Upper lobe of right lung (tissue), 1 donor: ENCODE measurements at regions of chr2 and their contacts with region 1.

Region 1: GRCh38 chr2:8681786-8682692 is at the start of gene ID2:
- DNase-seq: peak; percentile 100
- ATAC-seq: peak; percentile 84
- H3K4me3 ChIP-seq: peak within 1 kb of the TSS; percentile 71
- H3K27ac ChIP-seq: peak within 1 kb of the TSS; percentile 98
- H3K4me1 ChIP-seq: peaks cover 36% of the 10 kb centered on the region
- H3K27me3 ChIP-seq: no peaks in the 10 kb centered on the region
- CTCF ChIP-seq: no peak
- total RNA-seq, gene ID2: 99.5 TPM

Region 2: DNA sequence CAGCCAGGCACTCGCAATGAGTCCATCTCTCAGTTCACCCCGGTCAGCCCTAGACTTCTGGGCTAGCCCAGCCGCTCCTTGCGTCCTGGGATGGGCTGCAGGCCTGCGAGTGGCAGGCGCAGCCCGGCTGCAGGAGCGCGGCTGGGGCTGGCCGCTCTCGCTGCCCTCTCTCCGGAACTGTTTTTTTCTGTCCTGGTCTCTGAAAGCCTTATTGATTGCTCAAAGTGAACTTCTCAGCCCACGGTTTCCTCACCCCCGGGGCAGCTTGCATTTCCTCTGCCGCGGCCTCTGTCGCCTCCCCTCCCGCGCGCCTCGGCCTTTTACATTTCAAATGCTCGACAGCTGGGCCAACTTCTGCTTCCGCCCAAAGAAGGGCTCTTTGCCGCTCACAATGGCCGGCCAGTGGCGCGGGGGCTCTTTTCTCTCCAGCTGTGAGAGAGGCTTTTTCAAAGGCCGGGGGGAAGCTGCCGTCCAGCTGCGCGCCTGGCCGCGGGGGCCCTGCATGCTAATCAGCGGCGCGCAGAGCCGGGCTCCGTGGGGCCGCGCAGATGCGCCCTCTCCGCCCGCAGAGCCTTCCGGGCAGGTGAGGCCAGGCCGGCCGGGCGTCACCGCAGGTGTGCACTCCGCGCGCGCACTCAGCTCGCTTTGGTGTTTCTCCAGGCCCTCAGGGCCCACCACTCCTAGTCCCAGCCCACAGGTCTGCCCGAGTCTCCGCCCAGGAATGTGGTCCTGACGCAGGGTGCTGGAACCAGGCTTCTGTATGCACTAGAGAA is 1251.0 kb before region 1 on chr2:
- intact Hi-C with region 1: loop called (anchors 10 kb)
- DNase-seq: peak; percentile 88
- ATAC-seq: peak; percentile 80
- H3K4me3 ChIP-seq: peak overlapping the region; percentile 48
- H3K27ac ChIP-seq: peak overlapping the region; percentile 69
- H3K4me1 ChIP-seq: peaks cover 15% of the 10 kb centered on the region
- H3K27me3 ChIP-seq: no peaks in the 10 kb centered on the region
- CTCF ChIP-seq: no peak

Region 3: GRCh38 chr2:9095690-9096351 is 413.8 kb after region 1 on chr2:
- intact Hi-C with region 1: no loop called
- DNase-seq: peak; percentile 77
- ATAC-seq: peak; percentile 78
- H3K4me3 ChIP-seq: no peak overlapping the region
- H3K27ac ChIP-seq: peak overlapping the region; percentile 24
- H3K4me1 ChIP-seq: peaks cover 8% of the 10 kb centered on the region
- H3K27me3 ChIP-seq: no peaks in the 10 kb centered on the region
- CTCF ChIP-seq: peak; percentile 37